ENCODE measurements at regions of chr4 and their contacts with region 1.

Region 1: DNA sequence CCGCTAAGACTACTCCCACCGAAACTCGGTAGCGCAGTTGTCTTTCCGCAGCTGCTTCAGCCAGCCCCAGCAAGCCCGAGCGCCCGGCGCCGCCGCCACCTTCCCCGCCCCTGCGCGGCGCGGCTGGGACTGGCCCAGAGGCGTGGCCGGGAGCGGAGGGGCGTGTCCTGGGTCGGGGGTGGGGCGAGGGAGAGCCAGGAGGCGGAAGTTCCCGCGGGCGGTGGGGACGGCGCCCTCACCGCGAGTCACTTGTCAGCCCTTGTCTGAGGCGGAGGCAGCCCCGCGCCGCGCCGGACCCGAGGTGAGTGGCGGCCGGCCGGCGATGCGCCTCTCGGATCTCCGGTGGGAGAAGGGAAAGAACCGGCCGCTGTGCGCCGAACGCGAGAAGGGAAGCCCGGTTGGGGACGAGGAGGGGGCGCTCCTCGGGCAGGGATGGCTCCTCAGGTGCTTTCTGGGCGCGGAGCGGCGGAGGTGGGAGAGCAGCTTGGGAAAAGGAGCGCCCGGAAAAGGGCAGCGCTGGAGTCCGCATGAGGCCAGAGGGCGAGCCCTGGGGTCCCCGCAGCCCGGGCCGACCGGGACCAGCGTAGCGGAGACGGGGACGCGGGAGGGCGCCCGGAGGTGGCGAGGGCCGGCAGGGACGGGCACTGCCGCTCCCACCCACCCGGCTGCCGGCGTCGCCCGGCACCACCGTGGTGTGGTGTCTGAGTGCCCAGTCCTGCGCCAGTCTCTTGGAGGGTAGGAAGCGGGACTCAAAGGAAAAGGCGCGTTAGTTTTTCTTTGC is at the start of gene PDLIM5:
- DNase-seq: peak; percentile 88
- ATAC-seq: peak; percentile 96
- H3K4me3 Mint-ChIP-seq: peak within 1 kb of the TSS; percentile 90
- H3K27ac Mint-ChIP-seq: peak within 1 kb of the TSS; percentile 76
- H3K4me1 Mint-ChIP-seq: peaks cover 24% of the 10 kb centered on the region
- H3K27me3 Mint-ChIP-seq: peaks cover 12% of the 10 kb centered on the region
- CTCF ChIP-seq: no peak
- total RNA-seq, gene PDLIM5: 36.5 and 40.0 TPM in 2 replicates

Region 2: GRCh38 chr4:94207469-94208224 is 244.2 kb before region 1 on chr4 and contains the start of gene SMARCAD1:
- CTCF ChIA-PET with region 1: no interaction called
- POLR2A ChIA-PET with region 1: interaction called, 8 read pairs
- intact Hi-C with region 1: loop called (anchors 1 kb)
- DNase-seq: peak; percentile 72
- ATAC-seq: peak; percentile 87
- H3K4me3 Mint-ChIP-seq: peak within 1 kb of the TSS; percentile 99
- H3K27ac Mint-ChIP-seq: peak within 1 kb of the TSS; percentile 100
- H3K4me1 Mint-ChIP-seq: peaks cover 41% of the 10 kb centered on the region
- H3K27me3 Mint-ChIP-seq: peaks cover 7% of the 10 kb centered on the region
- CTCF ChIP-seq: no peak
- total RNA-seq, gene SMARCAD1: 27.4 and 30.5 TPM in 2 replicates

Region 3: DNA sequence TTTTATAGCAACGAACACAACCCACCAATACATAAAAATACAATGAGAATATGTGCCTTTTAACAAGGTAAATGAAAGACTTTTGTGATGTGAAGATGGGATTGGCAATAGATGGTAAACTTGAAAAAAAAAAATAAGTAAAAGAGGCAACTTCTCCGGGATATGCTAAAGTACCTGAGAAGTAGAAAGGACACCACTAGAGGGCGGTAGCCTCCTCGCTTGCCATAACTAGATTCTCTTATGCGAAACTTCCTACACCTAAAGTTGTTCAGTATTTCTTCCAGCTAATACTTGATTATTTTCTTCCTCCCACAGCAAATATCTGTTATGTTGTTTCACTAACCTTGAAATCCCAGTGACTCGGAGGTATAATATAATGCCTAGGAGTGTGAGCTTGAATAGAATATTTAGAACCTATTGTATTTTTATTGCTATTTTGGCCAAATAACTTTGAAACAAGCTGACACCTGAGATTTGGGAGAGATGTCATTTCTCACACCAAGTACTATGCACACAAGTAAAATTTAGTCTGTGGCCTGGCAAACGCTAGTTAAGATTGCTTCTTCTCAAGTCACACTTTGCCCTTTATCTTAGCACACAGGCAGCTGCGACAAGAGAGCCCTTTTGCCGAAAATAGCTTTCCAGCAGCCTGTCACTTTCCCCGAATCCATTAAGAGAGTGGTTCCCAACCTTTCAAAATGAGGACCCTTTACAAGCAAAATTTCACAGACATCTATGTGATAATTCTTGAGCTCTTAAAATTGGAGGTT is 45.0 kb before region 1 on chr4:
- CTCF ChIA-PET with region 1: no interaction called
- POLR2A ChIA-PET with region 1: no interaction called
- intact Hi-C with region 1: loop called (anchors 2 kb)
- DNase-seq: no peak
- ATAC-seq: peak; percentile 52
- H3K4me3 Mint-ChIP-seq: no peak overlapping the region
- H3K27ac Mint-ChIP-seq: no peak overlapping the region
- H3K4me1 Mint-ChIP-seq: no peaks in the 10 kb centered on the region
- H3K27me3 Mint-ChIP-seq: peaks cover 10% of the 10 kb centered on the region
- CTCF ChIP-seq: peak; percentile 86

Measured in activated B cell treated with CpG ODN at 0.5 μM for 24 hours (primary cell).